SK-N-SH (cell line): ENCODE measurements at regions of chr1 and their contacts with region 1.

Region 1: GRCh38 chr1:18581420-18581880 is 49.2 kb upstream of the PAX7 start:
- DNase-seq: peak; percentile 85
- H3K4me3 ChIP-seq: no peak overlapping the region; a peak in 1 of 4 replicates
- H3K27ac ChIP-seq: no peak overlapping the region
- H3K4me1 ChIP-seq: no peaks in the 10 kb centered on the region; a peak in 1 of 4 replicates
- H3K27me3 ChIP-seq: no peaks in the 10 kb centered on the region
- CTCF ChIP-seq: peak; percentile 65
- EP300 ChIP-seq: no peak
- RAD21 ChIP-seq: peak; percentile 84

Region 2: GRCh38 chr1:17933971-17934370 is 647.5 kb before region 1 on chr1:
- CTCF ChIA-PET with region 1: interaction called, 13 read pairs
- POLR2A ChIA-PET with region 1: no interaction called
- DNase-seq: peak; percentile 83
- H3K4me3 ChIP-seq: no peak overlapping the region
- H3K27ac ChIP-seq: peak overlapping the region in 1 of 2 experiments; percentile 87; a peak in 2 of 4 replicates
- H3K4me1 ChIP-seq: peaks cover 0 to 35% of the 10 kb centered on the region in 2 experiments; a peak in 2 of 4 replicates
- H3K27me3 ChIP-seq: no peaks in the 10 kb centered on the region
- CTCF ChIP-seq: no peak
- EP300 ChIP-seq: peak in 1 of 2 experiments; percentile 88; a peak in 2 of 4 replicates
- RAD21 ChIP-seq: peak; percentile 13; the same call in 1 of the 2 replicates

Region 3: DNA sequence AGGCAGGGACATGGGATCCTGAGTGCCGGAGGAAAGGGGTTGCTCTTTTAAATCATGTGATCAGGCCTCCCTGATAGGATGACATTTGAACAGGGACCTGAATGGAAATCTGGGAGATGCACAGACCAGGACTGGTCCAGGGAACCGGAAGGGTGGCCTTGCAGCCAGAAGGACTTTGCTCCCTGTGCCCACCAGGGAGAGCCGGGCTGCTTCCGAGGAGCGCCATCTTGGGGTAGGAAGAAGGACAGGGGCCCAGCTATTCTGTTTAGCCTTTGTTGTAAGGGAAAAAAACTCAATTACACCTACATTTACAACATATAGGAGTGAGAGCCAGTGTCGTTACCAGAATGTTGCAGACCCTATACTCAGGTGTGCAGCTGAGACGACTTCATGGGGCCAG is 95.3 kb before region 1 on chr1:
- CTCF ChIA-PET with region 1: interaction called, 14 read pairs
- POLR2A ChIA-PET with region 1: no interaction called
- DNase-seq: peak; percentile 52
- H3K4me3 ChIP-seq: no peak overlapping the region
- H3K27ac ChIP-seq: no peak overlapping the region
- H3K4me1 ChIP-seq: no peaks in the 10 kb centered on the region; a peak in 1 of 4 replicates
- H3K27me3 ChIP-seq: no peaks in the 10 kb centered on the region
- CTCF ChIP-seq: no peak
- EP300 ChIP-seq: no peak
- RAD21 ChIP-seq: peak; percentile 31; the same call in 1 of the 2 replicates

Region 4: DNA sequence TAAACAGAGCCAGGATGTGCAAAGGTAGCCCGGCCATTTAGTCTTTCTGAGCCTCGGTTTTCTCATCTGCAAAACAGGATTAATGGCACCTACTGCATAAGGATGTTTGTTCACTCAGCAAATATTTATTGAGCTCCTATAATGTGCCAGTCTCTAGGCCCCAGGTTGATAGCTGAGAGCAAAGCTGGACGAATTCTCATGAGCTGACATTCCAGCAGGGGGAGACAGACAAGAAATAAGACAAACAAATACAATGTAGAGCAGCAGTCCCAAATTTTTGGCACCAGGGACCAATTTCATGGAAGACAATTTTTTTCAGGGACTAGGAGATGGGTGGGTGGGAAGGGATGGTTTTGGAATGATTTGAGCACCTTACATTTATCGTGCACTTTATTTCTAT is 25.1 kb before region 1 on chr1:
- CTCF ChIA-PET with region 1: interaction called, 110 read pairs
- POLR2A ChIA-PET with region 1: no interaction called
- DNase-seq: peak; percentile 42
- H3K4me3 ChIP-seq: no peak overlapping the region; a peak in 1 of 4 replicates
- H3K27ac ChIP-seq: no peak overlapping the region
- H3K4me1 ChIP-seq: no peaks in the 10 kb centered on the region
- H3K27me3 ChIP-seq: no peaks in the 10 kb centered on the region; the same call in 1 of the 2 replicates
- CTCF ChIP-seq: peak; percentile 44
- EP300 ChIP-seq: no peak
- RAD21 ChIP-seq: peak; percentile 26

Region 5: DNA sequence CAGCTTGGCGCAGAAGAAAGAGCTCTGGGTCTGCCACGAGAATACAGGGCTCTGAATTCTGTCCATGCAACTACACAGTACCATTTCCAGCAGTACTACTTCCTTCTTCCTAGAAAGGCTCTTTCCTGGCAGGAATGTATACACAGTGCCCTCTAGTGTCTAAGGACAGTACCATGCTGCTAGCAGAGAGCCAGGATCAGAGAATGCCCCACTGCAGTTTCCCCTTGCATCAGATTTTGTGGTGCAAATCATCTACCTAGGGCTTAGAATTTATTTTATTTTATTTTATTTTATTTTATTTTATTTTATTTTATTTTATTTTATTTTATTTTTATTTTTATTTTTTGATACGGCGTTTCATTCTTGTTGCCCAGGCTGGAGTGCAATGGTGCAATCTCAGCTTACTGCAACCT is 100.0 kb after region 1 on chr1:
- CTCF ChIA-PET with region 1: interaction called, 15 read pairs
- POLR2A ChIA-PET with region 1: no interaction called
- DNase-seq: peak; percentile 78
- H3K4me3 ChIP-seq: no peak overlapping the region
- H3K27ac ChIP-seq: no peak overlapping the region
- H3K4me1 ChIP-seq: no peaks in the 10 kb centered on the region
- H3K27me3 ChIP-seq: no peaks in the 10 kb centered on the region
- CTCF ChIP-seq: peak; percentile 60
- EP300 ChIP-seq: no peak
- RAD21 ChIP-seq: peak; percentile 67

Region 6: GRCh38 chr1:18803151-18803791 is 221.8 kb after region 1 on chr1:
- CTCF ChIA-PET with region 1: no interaction called
- POLR2A ChIA-PET with region 1: no interaction called
- DNase-seq: no peak
- H3K4me3 ChIP-seq: no peak overlapping the region
- H3K27ac ChIP-seq: no peak overlapping the region
- H3K4me1 ChIP-seq: no peaks in the 10 kb centered on the region
- H3K27me3 ChIP-seq: no peaks in the 10 kb centered on the region
- CTCF ChIP-seq: no peak
- EP300 ChIP-seq: no peak
- RAD21 ChIP-seq: no peak